Activated naive CD4-positive, alpha-beta T cell treated with anti-CD3 and anti-CD28 coated beads for 36 hours (primary cell): ENCODE measurements at regions of chr7 and their contacts with region 1.

Region 1: DNA sequence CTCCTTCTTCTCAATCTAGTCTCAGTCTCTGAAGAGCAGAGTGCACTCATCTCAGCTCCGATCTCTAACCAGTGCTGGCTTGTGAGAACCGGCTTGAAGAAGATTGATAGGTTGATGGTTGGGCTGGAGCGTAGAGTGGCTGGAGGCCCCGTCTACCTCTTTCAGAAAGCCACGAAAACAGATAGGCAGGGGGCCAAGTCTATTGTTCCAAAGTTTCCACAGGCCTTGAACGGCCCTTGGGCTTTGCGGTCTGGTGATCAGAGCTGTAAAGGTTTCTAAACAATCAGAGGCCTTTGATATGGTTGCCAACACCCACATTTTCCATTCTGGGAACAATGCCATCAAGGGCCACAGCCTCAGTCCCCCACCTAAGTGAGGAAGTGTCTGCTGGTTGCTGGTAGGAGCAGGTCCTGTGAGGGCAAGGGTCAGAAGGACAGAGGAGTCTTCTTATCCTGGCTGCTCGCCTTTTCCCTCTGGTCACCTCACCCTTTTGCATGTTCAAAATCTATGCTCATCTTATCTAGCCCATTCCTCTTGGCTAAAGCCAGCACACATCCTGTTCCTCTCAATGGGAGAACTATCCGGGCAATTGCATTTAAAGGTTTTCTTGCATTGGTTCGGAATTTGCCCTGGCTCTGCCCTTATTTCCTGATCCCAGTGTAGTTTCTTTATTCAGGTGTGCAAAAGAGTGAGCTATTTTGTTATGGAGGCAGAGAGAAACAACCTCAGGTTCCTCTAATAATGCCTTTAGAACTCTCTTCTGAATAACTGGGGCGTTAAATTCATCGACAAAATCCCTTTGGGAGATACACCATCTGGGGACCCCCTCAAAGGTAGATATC is 70.3 kb upstream of the KMT2E start:
- DNase-seq: peak; percentile 82
- H3K4me3 Mint-ChIP-seq: peak overlapping the region; percentile 97
- H3K27ac Mint-ChIP-seq: peak overlapping the region; percentile 100
- H3K4me1 Mint-ChIP-seq: peaks cover 59% of the 10 kb centered on the region
- H3K27me3 Mint-ChIP-seq: no peaks in the 10 kb centered on the region

Region 2: DNA sequence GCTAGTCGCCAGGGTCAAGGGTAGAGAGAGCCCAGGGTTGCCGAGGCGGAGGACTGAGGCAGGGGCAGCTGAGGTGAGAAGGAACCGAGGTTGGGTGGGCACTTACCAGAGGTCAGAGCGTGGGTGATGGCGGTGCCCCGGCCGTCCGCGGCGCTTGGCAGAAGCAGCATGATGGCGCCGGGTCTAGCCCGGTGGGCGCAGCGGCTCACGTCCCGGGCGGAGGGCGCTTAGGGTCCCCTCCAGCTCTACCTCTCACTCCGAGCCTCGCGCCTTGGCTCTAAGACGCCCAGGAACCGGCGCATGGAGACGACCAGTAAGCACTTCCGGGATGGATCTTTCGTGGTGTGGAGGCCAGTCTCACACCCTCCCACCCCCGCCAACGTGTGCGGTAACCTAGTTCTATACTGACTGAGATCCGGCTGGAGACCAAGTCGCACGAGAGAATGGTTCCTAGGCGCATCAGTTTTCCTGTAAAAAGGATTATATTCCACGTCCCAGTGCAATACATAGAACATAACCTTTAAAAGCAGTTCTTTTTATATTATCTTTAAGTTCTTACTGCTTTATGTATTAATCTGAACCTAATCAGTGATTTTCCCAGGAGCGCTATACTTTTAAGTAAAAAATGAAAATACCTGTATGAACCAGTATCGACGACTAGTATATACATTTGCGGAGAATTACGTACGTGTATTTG is 1599.1 kb before region 1 on chr7 and contains the start of gene DNAJC2:
- CTCF ChIA-PET with region 1: no interaction called
- intact Hi-C with region 1: loop called (anchors 2 kb)
- DNase-seq: peak; percentile 90
- H3K4me3 Mint-ChIP-seq: peak within 1 kb of the TSS; percentile 99
- H3K27ac Mint-ChIP-seq: peak within 1 kb of the TSS; percentile 98
- H3K4me1 Mint-ChIP-seq: peaks cover 57% of the 10 kb centered on the region
- H3K27me3 Mint-ChIP-seq: no peaks in the 10 kb centered on the region
- total RNA-seq, gene DNAJC2: 39.8 to 42.1 TPM

Region 3: DNA sequence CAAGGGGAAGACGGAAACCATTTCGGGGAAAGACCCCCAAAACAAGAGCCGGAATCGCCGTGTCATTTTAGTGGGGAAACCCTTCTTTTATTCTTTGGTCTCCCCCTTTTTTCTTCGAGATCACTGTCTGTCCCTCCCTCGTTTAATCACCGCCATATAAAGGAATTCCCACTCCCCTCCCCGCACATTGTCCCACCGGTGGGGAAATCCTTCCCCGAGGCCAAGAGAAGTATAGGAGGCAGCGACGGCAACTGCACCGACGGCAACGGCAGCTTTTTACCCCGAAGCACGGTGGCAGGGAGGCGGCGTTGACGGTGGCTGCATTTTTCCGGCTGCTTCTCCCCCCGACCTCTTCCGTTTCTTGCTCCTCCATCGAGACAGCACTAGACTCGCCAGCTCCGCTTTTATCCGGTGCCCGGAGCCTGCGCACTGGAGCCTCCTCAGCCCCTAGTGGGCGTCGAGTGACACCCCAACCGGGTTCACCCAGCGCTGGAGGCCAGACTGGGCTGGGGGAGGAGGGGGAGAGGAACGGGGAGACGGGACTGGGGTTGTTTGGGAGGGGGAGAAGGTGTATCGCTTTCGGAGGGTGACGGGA is 69.6 kb after region 1 on chr7:
- CTCF ChIA-PET with region 1: interaction called, 5 read pairs
- intact Hi-C with region 1: loop called (anchors 1 kb)
- DNase-seq: peak; percentile 94
- H3K4me3 Mint-ChIP-seq: peak overlapping the region; percentile 95
- H3K27ac Mint-ChIP-seq: peak overlapping the region; percentile 99
- H3K4me1 Mint-ChIP-seq: peaks cover 25% of the 10 kb centered on the region
- H3K27me3 Mint-ChIP-seq: no peaks in the 10 kb centered on the region

Region 4: GRCh38 chr7:105289704-105290103 is 346.0 kb after region 1 on chr7:
- CTCF ChIA-PET with region 1: no interaction called
- intact Hi-C with region 1: loop called (anchors 1 kb)
- DNase-seq: peak; percentile 40
- H3K4me3 Mint-ChIP-seq: no peak overlapping the region
- H3K27ac Mint-ChIP-seq: peak overlapping the region; percentile 14
- H3K4me1 Mint-ChIP-seq: peaks cover 21% of the 10 kb centered on the region
- H3K27me3 Mint-ChIP-seq: no peaks in the 10 kb centered on the region

Region 5: GRCh38 chr7:105522062-105522936 is 578.6 kb after region 1 on chr7 and contains the start of gene PUS7:
- CTCF ChIA-PET with region 1: no interaction called
- intact Hi-C with region 1: loop called (anchors 2 kb)
- DNase-seq: peak; percentile 82
- H3K4me3 Mint-ChIP-seq: peak within 1 kb of the TSS; percentile 96
- H3K27ac Mint-ChIP-seq: peak within 1 kb of the TSS; percentile 81
- H3K4me1 Mint-ChIP-seq: peaks cover 19% of the 10 kb centered on the region
- H3K27me3 Mint-ChIP-seq: no peaks in the 10 kb centered on the region
- total RNA-seq, gene PUS7: 14.3 to 14.6 TPM

Region 6: GRCh38 chr7:105808703-105809590 is 865.2 kb after region 1 on chr7:
- CTCF ChIA-PET with region 1: no interaction called
- intact Hi-C with region 1: loop called (anchors 1 kb)
- DNase-seq: peak; percentile 96
- H3K4me3 Mint-ChIP-seq: no peak overlapping the region
- H3K27ac Mint-ChIP-seq: peak overlapping the region; percentile 38
- H3K4me1 Mint-ChIP-seq: peaks cover 58% of the 10 kb centered on the region
- H3K27me3 Mint-ChIP-seq: peaks cover 3% of the 10 kb centered on the region

Region 7: GRCh38 chr7:106346678-106347217 is 1403.0 kb after region 1 on chr7:
- CTCF ChIA-PET with region 1: no interaction called
- intact Hi-C with region 1: loop called (anchors 2 kb)
- DNase-seq: peak; percentile 75
- H3K4me3 Mint-ChIP-seq: peak overlapping the region; percentile 15
- H3K27ac Mint-ChIP-seq: peak overlapping the region; percentile 97
- H3K4me1 Mint-ChIP-seq: peaks cover 55% of the 10 kb centered on the region
- H3K27me3 Mint-ChIP-seq: peaks cover 6% of the 10 kb centered on the region